Caco-2 (cell line): ENCODE measurements at regions of chr13 and their contacts with region 1.

Region 1: DNA sequence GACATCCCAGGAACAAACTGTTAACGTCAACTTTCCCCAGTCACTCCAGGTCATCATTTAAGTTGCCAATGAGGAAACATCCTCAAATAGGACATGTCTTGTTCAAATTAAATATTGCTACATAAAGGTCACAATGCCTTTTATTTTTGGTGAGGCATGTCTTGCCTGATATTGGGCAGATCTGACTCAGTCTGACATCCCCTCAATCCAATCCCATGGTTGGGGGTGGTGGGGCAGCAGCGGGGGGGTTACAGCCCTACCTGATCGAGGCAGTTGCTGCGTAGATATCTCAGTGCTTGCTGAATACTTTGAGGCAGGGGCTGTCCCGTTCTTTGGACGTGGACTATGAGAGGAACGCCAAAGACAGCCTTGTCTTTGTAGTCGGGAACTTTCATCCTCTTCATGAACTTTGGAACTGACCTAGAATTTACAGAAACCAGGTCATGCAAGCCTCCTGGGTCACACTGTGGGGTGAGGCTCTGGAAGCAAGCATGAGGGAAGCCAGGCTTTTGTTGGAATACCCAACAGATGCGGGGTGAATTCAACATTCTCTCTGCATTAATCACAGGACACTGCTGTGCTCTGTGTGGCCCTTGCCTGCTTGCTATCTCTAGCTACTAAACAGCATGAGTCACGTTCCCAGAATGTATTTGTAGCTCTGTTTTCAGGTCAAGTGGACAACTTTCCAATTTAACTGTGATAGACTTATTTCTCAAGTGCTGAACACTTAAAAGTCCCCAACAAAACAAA is 109.8 kb downstream of the KL start:
- DNase-seq: peak; percentile 85 to 91
- H3K4me3 ChIP-seq: no peak overlapping the region
- H3K4me3 Mint-ChIP-seq: peak overlapping the region; percentile 54
- H3K27ac Mint-ChIP-seq: peak overlapping the region; percentile 88
- H3K4me1 ChIP-seq: peaks cover 41% of the 10 kb centered on the region
- H3K4me1 Mint-ChIP-seq: peaks cover 37% of the 10 kb centered on the region
- H3K27me3 ChIP-seq: no peaks in the 10 kb centered on the region
- H3K27me3 Mint-ChIP-seq: no peaks in the 10 kb centered on the region
- CTCF ChIP-seq: no peak

Region 2: GRCh38 chr13:33153421-33154404 is 27.7 kb after region 1 on chr13:
- CTCF ChIA-PET with region 1: no interaction called
- POLR2A ChIA-PET with region 1: no interaction called
- intact Hi-C with region 1: loop called (anchors 2 kb)
- DNase-seq: peak; percentile 11 to 75
- H3K4me3 ChIP-seq: no peak overlapping the region
- H3K4me3 Mint-ChIP-seq: no peak overlapping the region
- H3K27ac Mint-ChIP-seq: peak overlapping the region; percentile 43
- H3K4me1 ChIP-seq: peaks cover 28% of the 10 kb centered on the region
- H3K4me1 Mint-ChIP-seq: peaks cover 31% of the 10 kb centered on the region
- H3K27me3 ChIP-seq: no peaks in the 10 kb centered on the region
- H3K27me3 Mint-ChIP-seq: no peaks in the 10 kb centered on the region
- CTCF ChIP-seq: no peak